A673 (cell line): ENCODE measurements at regions of chr13 and their contacts with region 1.

Region 1: DNA sequence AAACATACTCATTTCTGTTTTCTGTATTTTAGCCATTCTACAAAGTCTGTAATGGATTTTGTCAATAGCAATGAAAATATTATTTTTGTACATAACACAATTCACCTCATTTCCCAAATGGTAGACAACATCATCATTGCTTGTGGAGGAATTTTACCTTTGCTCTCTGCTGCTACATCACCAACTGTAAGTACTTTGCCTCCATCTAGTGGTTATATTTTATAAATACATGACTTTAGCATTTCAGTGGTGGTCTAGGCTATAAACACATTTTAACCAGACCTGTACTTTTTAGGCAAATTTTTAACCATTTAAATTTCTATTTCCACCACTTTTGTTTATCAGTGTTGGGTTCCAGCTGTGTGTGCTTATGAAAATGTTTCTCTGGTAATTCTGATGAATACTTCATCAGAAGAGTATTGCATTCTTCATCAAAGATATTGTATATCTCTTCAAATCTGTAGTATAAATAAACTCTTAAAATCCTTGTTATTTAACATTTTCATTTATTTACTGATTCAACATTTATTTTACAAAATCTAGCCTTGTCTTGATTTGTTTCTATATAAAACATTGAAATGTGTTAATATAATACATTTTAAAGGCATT is 222.4 kb downstream of the NBEA start:
- DNase-seq: peak; percentile 57
- H3K4me3 ChIP-seq: no peak overlapping the region
- H3K27ac ChIP-seq: no peak overlapping the region
- H3K4me1 ChIP-seq: no peaks in the 10 kb centered on the region
- H3K27me3 ChIP-seq: no peaks in the 10 kb centered on the region
- CTCF ChIP-seq: peak; percentile 66

Region 2: DNA sequence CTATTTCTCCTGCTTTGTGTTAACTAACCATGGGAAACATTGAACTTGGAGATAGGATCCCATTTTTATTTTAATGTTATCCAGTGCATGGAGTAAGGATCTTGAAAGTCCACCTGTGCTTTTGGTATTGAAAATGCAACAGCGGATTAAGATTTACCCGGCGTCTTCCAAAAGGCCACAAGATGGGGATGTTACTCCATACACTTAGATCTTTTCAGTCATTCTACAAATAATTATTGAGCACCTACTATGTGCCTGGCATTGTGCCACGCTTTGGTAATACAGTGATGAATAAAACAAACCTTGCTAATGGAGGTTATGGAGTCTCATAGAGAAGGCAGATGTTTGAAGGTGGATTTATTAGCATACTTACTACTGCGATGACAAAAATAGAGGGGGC is 1289.6 kb before region 1 on chr13:
- CTCF ChIA-PET with region 1: no interaction called
- POLR2A ChIA-PET with region 1: no interaction called
- intact Hi-C with region 1: loop called (anchors 2 kb)
- DNase-seq: no peak
- H3K4me3 ChIP-seq: no peak overlapping the region
- H3K27ac ChIP-seq: no peak overlapping the region
- H3K4me1 ChIP-seq: peaks cover 17% of the 10 kb centered on the region
- H3K27me3 ChIP-seq: no peaks in the 10 kb centered on the region
- CTCF ChIP-seq: peak; percentile 32; the same call in 1 of the 2 replicates

Region 3: GRCh38 chr13:33931397-33932311 is 1232.8 kb before region 1 on chr13:
- CTCF ChIA-PET with region 1: no interaction called
- POLR2A ChIA-PET with region 1: no interaction called
- intact Hi-C with region 1: loop called (anchors 2 kb)
- DNase-seq: peak; percentile 60
- H3K4me3 ChIP-seq: no peak overlapping the region
- H3K27ac ChIP-seq: no peak overlapping the region
- H3K4me1 ChIP-seq: no peaks in the 10 kb centered on the region
- H3K27me3 ChIP-seq: no peaks in the 10 kb centered on the region
- CTCF ChIP-seq: peak; percentile 60

Region 4: DNA sequence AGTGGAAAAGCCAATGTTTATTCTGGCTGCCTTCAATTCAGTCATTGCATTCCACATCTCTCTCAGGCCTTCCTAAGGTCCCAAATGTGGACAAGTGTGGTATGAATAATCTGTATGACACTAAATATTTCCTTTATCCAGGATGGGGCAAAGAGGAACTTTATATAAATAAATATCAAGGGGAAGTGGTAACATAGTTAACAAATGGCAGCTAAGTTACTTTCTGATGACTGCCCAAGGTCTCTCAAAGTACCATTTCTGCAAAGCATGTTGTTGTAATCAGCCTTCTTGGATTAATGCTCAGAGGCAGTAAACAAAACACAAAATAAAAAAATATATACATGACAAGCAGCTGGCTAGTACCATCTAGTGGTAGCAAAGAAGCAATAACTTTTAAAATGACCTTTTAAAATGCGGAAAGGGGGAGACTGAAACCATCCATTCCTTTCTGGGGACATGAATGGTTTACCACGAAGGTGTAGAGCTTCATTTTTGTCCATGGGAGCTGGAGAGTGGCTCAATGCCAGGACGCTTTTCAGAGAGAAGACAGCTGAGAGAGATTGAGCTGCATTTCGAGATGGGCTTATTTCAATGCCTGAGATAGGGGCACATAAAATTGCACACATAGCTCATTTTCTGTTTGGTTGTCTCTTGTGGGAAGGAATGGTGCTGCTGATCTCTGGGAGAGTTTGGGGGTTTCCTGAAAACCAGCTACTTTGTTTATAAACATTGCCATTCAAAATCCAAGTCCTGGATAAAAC is 1087.3 kb before region 1 on chr13:
- CTCF ChIA-PET with region 1: no interaction called
- POLR2A ChIA-PET with region 1: no interaction called
- intact Hi-C with region 1: loop called (anchors 10 kb)
- DNase-seq: peak; percentile 22
- H3K4me3 ChIP-seq: no peak overlapping the region
- H3K27ac ChIP-seq: no peak overlapping the region
- H3K4me1 ChIP-seq: no peaks in the 10 kb centered on the region
- H3K27me3 ChIP-seq: peaks cover 4% of the 10 kb centered on the region
- CTCF ChIP-seq: peak; percentile 67

Region 5: DNA sequence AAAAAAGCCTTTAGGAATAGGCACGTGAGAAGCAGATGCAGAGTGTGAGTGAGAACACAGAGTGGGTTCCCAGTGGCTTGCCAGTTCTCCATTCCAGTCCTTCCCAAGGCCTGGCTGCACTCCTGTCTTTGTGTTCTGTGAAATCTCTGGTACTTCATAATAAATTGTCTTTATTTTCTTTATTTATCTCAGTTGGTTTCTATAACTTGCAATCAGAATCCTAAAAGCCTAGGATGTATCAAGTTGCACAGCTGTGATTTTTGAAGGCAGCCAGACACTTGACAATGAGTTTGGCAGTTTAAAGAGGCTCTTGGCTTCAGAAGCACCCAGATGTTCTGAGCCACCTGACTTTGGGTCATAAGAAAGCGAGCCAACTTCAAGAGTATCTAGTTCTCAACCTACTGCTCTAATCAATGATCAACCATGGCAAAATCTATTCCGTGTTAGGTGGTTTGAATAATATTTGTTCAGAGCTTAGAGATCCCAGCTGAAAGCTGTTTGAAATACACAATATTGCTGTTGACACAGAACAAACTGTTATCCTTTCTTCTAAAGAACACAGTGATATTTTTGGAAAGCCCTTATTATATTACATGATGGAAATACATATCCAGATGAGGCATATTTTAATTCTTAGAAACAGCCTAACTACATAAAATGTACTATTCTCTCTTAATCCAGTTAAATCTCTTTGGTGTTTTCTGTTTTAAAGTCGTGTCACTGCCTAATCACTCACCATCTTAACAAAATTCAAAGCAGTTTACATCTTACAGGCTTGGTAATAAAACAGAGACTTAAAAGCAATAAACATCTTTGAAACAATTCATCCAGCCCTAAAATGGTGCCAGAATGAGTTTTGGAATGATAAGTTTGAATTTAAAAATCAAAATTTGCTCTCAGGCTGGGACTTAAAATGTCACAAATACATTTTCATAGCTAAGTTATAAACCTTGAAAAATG is 705.4 kb before region 1 on chr13:
- CTCF ChIA-PET with region 1: no interaction called
- POLR2A ChIA-PET with region 1: no interaction called
- intact Hi-C with region 1: no loop called
- DNase-seq: no peak
- H3K4me3 ChIP-seq: no peak overlapping the region
- H3K27ac ChIP-seq: no peak overlapping the region
- H3K4me1 ChIP-seq: no peaks in the 10 kb centered on the region
- H3K27me3 ChIP-seq: no peaks in the 10 kb centered on the region
- CTCF ChIP-seq: no peak

Region 6: DNA sequence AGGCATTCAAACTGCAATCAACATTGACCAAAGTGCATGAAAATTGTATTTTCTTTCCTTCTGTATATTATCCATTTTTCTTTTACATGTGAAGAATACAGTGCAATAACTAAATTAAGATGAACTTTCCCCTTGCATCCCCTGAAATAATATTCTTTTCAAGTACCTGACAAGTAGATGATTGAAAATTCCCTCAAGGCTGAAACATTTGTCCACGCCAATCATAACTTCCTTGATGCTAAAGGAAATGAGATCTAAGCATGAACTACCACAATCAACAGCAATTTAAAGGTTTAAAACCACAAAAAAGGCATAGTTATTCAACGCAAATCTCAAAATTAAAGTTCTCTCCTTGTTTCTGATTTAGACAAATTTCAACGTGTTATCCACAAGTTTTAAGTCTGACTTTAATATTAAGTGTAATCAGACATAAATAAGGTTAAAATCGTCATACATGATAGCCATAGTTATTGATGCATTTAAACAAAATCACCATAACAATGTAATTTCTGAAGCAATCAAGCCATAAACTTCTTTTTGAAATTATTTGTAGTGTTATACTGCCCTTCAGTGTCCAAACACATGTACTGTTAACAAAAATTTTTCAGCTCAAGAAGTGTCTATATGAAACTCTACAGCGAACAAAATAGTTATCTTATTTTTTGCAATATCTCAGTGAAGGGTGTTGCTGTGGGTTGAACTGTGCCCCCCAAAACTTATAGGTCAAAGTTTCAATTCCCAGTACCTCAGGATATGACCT is 797.2 kb after region 1 on chr13:
- CTCF ChIA-PET with region 1: no interaction called
- POLR2A ChIA-PET with region 1: no interaction called
- intact Hi-C with region 1: loop called (anchors 5 kb)
- DNase-seq: peak; percentile 15
- H3K4me3 ChIP-seq: no peak overlapping the region
- H3K27ac ChIP-seq: no peak overlapping the region
- H3K4me1 ChIP-seq: peaks cover 20% of the 10 kb centered on the region
- H3K27me3 ChIP-seq: no peaks in the 10 kb centered on the region
- CTCF ChIP-seq: peak; percentile 39; the same call in 1 of the 2 replicates